ENCODE measurements at regions of chr5 and their contacts with region 1.

Region 1: GRCh38 chr5:68287976-68288706 is 72.6 kb downstream of the PIK3R1 start:
- DNase-seq: no peak
- H3K4me3 ChIP-seq: peak overlapping the region; percentile 54 to 62 (median 56)
- H3K27ac ChIP-seq: peak overlapping the region; percentile 80 to 89 (median 86)
- H3K4me1 ChIP-seq: peaks cover 66 to 100% (median 100%) of the 10 kb centered on the region in 4 donors
- H3K27me3 ChIP-seq: no peaks in the 10 kb centered on the region
- CTCF ChIP-seq: no peak
- EP300 ChIP-seq: no peak
- POLR2A ChIP-seq: no peak

Region 2: GRCh38 chr5:68460147-68460798 is 172.1 kb after region 1 on chr5:
- intact Hi-C with region 1: loop called (anchors 2 kb)
- DNase-seq: no peak
- H3K4me3 ChIP-seq: no peak overlapping the region
- H3K27ac ChIP-seq: no peak overlapping the region
- H3K4me1 ChIP-seq: peaks cover 9 to 33% (median 22%) of the 10 kb centered on the region in 4 donors
- H3K27me3 ChIP-seq: no peaks in the 10 kb centered on the region
- CTCF ChIP-seq: peak; percentile 42 to 70 (median 61)
- EP300 ChIP-seq: no peak
- POLR2A ChIP-seq: no peak

Region 3: GRCh38 chr5:68962757-68963484 is 674.8 kb after region 1 on chr5:
- intact Hi-C with region 1: loop called (anchors 5 kb)
- DNase-seq: no peak
- H3K4me3 ChIP-seq: no peak overlapping the region
- H3K27ac ChIP-seq: peak overlapping the region in 1 of 4 donors; percentile 21
- H3K4me1 ChIP-seq: peaks cover 0 to 11% (median 5%) of the 10 kb centered on the region in 4 donors
- H3K27me3 ChIP-seq: no peaks in the 10 kb centered on the region
- CTCF ChIP-seq: peak; percentile 80 to 91 (median 88)
- EP300 ChIP-seq: no peak
- POLR2A ChIP-seq: no peak

Measured in esophagus muscularis mucosa (tissue), 4 donors.